ENCODE measurements at regions of chr1 and their contacts with region 1.

Region 1: GRCh38 chr1:10128101-10128765 is 82.1 kb upstream of the KIF1B start:
- DNase-seq: no peak
- ATAC-seq: no peak
- H3K4me3 Mint-ChIP-seq: no peak overlapping the region
- H3K27ac Mint-ChIP-seq: no peak overlapping the region
- H3K4me1 Mint-ChIP-seq: no peaks in the 10 kb centered on the region
- H3K27me3 Mint-ChIP-seq: no peaks in the 10 kb centered on the region

Region 2: DNA sequence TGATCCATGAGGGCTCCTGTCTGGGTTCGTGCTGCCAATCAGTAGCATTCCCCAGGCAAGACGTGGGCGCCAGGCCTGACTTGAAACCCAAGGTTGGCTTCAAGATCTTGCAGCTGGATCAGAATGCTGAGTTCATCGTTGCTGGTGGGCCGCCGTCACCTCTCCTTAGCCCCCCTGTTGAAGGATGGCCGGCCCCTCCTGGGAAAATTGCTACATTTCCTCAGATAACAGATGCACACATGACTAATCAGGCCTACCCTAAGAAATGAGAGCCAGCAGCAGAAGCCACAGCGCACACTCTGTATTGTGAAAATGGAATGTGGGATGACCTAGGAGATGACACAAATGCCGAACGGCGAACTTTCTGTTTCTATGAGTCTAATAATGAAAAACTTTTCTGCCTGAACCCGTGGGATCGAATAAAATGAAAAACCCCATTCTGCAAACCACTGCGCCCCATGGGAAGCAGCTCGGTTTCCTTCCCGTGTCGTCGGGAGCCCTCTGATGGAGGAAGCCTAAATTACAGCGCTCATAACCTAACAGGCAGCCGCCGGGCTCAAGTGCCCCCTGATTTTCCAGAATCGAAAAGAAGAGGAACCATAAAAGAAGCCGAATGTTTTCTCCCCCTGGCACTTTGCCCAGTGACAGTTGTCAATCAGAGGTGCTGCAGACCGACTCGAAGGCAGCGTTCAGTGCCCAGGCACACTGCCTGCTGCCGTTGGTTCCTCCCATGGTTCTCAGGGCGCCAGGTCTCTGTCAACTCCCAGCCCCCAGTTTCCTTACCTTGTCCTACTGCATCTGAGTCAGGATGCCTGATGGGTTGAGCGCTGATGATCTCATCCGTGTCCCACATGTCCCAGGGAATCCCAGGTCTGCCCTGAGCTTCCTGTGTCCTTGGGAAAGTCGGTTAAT is 931.8 kb before region 1 on chr1:
- CTCF ChIA-PET with region 1: no interaction called
- POLR2A ChIA-PET with region 1: no interaction called
- intact Hi-C with region 1: no loop called
- DNase-seq: peak; percentile 83
- ATAC-seq: peak; percentile 84
- H3K4me3 Mint-ChIP-seq: no peak overlapping the region
- H3K27ac Mint-ChIP-seq: no peak overlapping the region
- H3K4me1 Mint-ChIP-seq: peaks cover 19% of the 10 kb centered on the region
- H3K27me3 Mint-ChIP-seq: peaks cover 45% of the 10 kb centered on the region

Region 3: DNA sequence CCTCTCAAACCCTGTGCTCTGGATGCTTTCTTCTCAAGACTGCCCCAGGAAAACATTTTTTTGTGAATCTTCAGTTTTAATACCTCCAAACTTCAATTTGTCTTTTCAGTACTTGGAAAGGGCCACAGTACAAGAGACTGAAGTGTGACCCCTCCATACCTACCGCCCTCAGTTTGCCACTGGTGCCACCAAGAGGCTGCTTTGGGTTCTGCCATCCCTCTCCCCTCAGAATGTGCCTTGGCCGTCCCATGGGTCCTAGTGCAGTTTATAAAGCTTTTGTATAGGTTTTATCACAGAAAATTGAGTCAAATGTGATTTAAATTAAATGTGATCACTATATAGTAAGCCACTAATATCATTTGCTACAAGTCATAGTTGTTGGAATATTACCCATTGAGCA is 209.8 kb after region 1 on chr1:
- CTCF ChIA-PET with region 1: no interaction called
- POLR2A ChIA-PET with region 1: no interaction called
- intact Hi-C with region 1: loop called in 1 of 2 experiments (anchors 5 kb)
- DNase-seq: peak; percentile 69
- ATAC-seq: peak; percentile 86
- H3K4me3 Mint-ChIP-seq: no peak overlapping the region
- H3K27ac Mint-ChIP-seq: no peak overlapping the region
- H3K4me1 Mint-ChIP-seq: no peaks in the 10 kb centered on the region
- H3K27me3 Mint-ChIP-seq: no peaks in the 10 kb centered on the region

Measured in activated CD4-positive, alpha-beta T cell treated with anti-CD3 and anti-CD28 coated beads for 36 hours (primary cell).